ENCODE measurements at regions of chr15 and their contacts with region 1.

Region 1: GRCh38 chr15:22961762-22962161 is 18.4 kb downstream of the CYFIP1 start:
- DNase-seq: peak; percentile 66
- H3K4me3 ChIP-seq: peak overlapping the region in 1 of 3 experiments; percentile 4
- H3K27ac ChIP-seq: peak overlapping the region; percentile 45
- H3K4me1 ChIP-seq: peaks cover 33% of the 10 kb centered on the region
- H3K27me3 ChIP-seq: no peaks in the 10 kb centered on the region
- CTCF ChIP-seq: no peak
- POLR2A ChIP-seq: no peak

Region 2: DNA sequence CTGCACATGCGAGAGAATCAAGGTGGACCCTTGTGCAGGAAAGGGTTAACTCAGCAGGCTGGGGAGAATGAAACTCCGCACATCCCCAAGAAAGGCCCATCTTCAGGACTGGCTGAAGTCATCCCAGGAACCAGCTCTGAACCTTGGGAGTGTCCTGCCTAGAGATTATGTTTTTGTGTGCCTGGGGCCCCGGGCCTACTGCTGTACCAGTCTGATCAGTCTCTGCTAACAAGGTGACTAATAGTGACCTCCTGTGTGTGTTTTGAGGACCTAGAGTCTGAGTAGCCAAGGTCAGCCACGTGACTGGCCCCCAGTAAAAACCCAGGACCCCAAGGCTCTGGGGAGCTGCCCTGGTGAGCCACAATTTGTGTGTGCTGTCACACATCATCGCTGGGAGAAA is 39.8 kb before region 1 on chr15:
- CTCF ChIA-PET with region 1: interaction called, 3 read pairs
- POLR2A ChIA-PET with region 1: no interaction called
- dilution Hi-C with region 1: no loop called
- intact Hi-C with region 1: loop called (anchors 5 kb)
- DNase-seq: no peak
- H3K4me3 ChIP-seq: no peak overlapping the region
- H3K27ac ChIP-seq: no peak overlapping the region
- H3K4me1 ChIP-seq: no peaks in the 10 kb centered on the region
- H3K27me3 ChIP-seq: no peaks in the 10 kb centered on the region
- CTCF ChIP-seq: no peak
- POLR2A ChIP-seq: no peak